ENCODE measurements at regions of chr3 and their contacts with region 1.

Region 1: DNA sequence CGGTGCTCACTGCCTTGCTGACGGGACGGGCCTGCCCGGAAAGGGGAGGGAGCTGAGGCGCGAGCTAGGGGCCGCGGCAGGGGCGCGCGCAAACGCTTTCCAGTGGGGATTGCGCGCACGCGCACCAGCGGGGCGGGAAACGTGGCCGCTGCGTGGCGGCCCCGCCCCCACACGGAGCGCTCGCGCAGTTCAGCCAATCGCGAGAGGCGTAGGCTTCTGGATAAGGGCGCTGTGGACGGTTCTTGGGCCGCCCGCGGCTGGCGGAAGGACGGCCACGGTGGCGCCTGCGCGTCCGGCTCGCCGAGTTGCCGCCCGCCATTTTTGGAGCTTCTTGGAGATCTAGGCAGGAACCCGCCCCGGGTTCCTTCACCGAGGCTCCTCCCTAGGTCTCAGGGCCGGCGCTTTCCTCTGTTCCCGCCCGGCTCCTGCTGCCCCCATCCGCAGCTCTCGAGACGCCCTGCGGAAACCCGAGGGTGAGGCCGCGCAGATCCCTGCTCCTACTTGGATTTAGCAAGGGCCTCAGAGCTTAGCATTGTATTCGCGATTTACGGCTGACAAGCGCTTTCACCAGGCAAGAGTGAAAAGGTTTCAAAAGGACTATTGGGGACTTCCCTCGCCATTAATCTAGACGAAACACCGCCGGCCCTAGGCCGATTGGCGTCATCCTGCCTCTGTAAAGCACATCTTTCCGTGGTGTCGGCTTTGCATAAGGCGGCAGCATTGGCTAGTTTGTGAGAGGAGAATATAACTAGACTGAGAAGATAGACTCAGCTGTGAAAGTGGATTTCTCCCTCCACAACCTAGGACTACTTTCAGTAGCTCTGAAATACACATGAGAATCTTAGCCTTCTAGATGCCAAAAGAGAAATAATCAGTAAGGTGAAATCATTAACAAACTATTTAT is 496 bp upstream of the STAG1 start:
- DNase-seq: peak; percentile 97

Region 2: GRCh38 chr3:136343446-136344281 is 409.0 kb before region 1 on chr3:
- in situ Hi-C with region 1: no loop called
- DNase-seq: peak; percentile 17

Region 3: GRCh38 chr3:137013955-137014688 is 261.4 kb after region 1 on chr3:
- in situ Hi-C with region 1: loop called (anchors 25 kb)
- DNase-seq: peak; percentile 93